ENCODE measurements at regions of chr14 and their contacts with region 1.

Region 1: GRCh38 chr14:21642683-21643082 is 7.9 kb upstream of the OR10G2 start:
- DNase-seq: no peak
- ATAC-seq: no peak
- H3K4me3 ChIP-seq: peak overlapping the region in 1 of 2 donors; percentile 13
- H3K4me3 Mint-ChIP-seq: peak overlapping the region; percentile 32 to 69 (median 58)
- H3K27ac ChIP-seq: no peak overlapping the region
- H3K27ac Mint-ChIP-seq: peak overlapping the region in 1 of 2 donors; percentile 53
- H3K4me1 ChIP-seq: no peaks in the 10 kb centered on the region
- H3K4me1 Mint-ChIP-seq: peaks cover 2 to 10% (median 4%) of the 10 kb centered on the region in 3 donors
- H3K27me3 ChIP-seq: peaks cover 0 to 5% of the 10 kb centered on the region in 2 experiments
- H3K27me3 Mint-ChIP-seq: peaks cover 0 to 3% of the 10 kb centered on the region in 2 donors

Region 2: GRCh38 chr14:21510735-21511657 is 131.7 kb before region 1 on chr14 and contains the start of gene METTL3:
- CTCF ChIA-PET with region 1: no interaction called
- POLR2A ChIA-PET with region 1: no interaction called
- DNase-seq: peak; percentile 84 to 98 (median 95)
- ATAC-seq: peak; percentile 99 to 100 (median 100)
- H3K4me3 ChIP-seq: peak within 1 kb of the TSS; percentile 78 to 89
- H3K4me3 Mint-ChIP-seq: peak within 1 kb of the TSS; percentile 98 to 99 (median 99)
- H3K27ac ChIP-seq: peak within 1 kb of the TSS; percentile 85
- H3K27ac Mint-ChIP-seq: peak within 1 kb of the TSS; percentile 96 to 98
- H3K4me1 ChIP-seq: peaks cover 14 to 25% of the 10 kb centered on the region in 2 experiments
- H3K4me1 Mint-ChIP-seq: peaks cover 40 to 45% (median 41%) of the 10 kb centered on the region in 3 donors
- H3K27me3 ChIP-seq: peaks cover 0 to 2% of the 10 kb centered on the region in 2 experiments
- H3K27me3 Mint-ChIP-seq: no peaks in the 10 kb centered on the region
- total RNA-seq, gene METTL3: 48.0 to 94.6 (median 91.6) TPM

Region 3: DNA sequence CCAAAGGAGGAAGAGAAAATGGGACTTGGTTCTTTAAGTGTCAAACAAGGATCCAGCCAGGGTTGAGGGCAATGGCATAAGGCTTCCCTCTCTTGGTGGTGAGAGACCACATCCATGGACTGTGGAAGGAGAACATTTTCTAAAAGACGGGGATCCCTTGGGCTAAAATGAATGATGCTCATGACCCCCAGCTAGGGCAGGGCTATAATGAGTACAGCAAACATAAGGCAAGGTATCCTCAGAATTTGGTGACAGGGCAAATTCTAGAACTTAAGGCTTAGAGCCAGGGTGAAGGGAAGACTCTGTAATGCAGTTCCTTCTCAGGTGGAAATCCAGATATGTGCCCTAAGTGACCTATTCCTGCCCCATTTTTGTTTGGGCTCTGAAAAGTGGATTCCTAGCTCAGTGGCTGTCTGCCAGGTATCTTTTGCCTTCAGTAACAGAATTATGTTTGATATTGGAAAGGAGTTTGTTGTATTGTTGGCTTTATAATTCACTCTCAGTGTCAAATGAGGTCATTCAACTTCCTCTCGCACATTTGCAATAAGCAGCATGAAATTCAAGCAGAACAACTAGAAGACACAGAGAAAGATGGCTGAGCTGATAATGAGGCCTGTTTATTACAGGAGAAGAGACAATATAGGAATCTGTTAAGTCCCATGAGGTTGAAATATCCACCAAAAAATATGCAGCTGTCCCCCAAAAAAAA is 869.6 kb after region 1 on chr14:
- CTCF ChIA-PET with region 1: interaction called in 1 of 2 experiments, 9 read pairs
- POLR2A ChIA-PET with region 1: interaction called in 1 of 2 experiments, 12 read pairs
- DNase-seq: peak in 1 of 35 experiments; percentile 60
- ATAC-seq: peak in 3 of 4 experiments; percentile 36 to 49 (median 38)
- H3K4me3 ChIP-seq: peak overlapping the region; percentile 23 to 52
- H3K4me3 Mint-ChIP-seq: peak overlapping the region; percentile 82 to 86 (median 83)
- H3K27ac ChIP-seq: peak overlapping the region; percentile 90
- H3K27ac Mint-ChIP-seq: peak overlapping the region; percentile 95 to 96
- H3K4me1 ChIP-seq: peaks cover 59 to 87% of the 10 kb centered on the region in 2 experiments
- H3K4me1 Mint-ChIP-seq: peaks cover 84 to 93% (median 91%) of the 10 kb centered on the region in 3 donors
- H3K27me3 ChIP-seq: no peaks in the 10 kb centered on the region
- H3K27me3 Mint-ChIP-seq: no peaks in the 10 kb centered on the region